Stomach (tissue), 19 donors: ENCODE measurements at regions of chrX and their contacts with region 1.

Region 1: GRCh38 chrX:69060631-69061408 is 104.4 kb downstream of the PJA1 start:
- DNase-seq: peak; percentile 54 to 63
- H3K4me3 ChIP-seq: no peak overlapping the region
- H3K27ac ChIP-seq: no peak overlapping the region
- H3K4me1 ChIP-seq: no peaks in the 10 kb centered on the region
- H3K27me3 ChIP-seq: peaks cover 0 to 6% (median 0%) of the 10 kb centered on the region in 3 donors
- CTCF ChIP-seq: peak in 4 of 7 experiments; percentile 12 to 50 (median 23)
- EP300 ChIP-seq: no peak
- POLR2A ChIP-seq: no peak

Region 2: GRCh38 chrX:69222103-69223090 is 161.6 kb after region 1 on chrX:
- intact Hi-C with region 1: loop called (anchors 10 kb)
- DNase-seq: peak; percentile 68 to 88
- H3K4me3 ChIP-seq: no peak overlapping the region
- H3K27ac ChIP-seq: no peak overlapping the region
- H3K4me1 ChIP-seq: peaks cover 0 to 12% (median 0%) of the 10 kb centered on the region in 4 donors
- H3K27me3 ChIP-seq: peaks cover 0 to 22% (median 0%) of the 10 kb centered on the region in 3 donors
- CTCF ChIP-seq: peak in 5 of 7 experiments; percentile 42 to 75 (median 54)
- EP300 ChIP-seq: no peak
- POLR2A ChIP-seq: no peak

Region 3: DNA sequence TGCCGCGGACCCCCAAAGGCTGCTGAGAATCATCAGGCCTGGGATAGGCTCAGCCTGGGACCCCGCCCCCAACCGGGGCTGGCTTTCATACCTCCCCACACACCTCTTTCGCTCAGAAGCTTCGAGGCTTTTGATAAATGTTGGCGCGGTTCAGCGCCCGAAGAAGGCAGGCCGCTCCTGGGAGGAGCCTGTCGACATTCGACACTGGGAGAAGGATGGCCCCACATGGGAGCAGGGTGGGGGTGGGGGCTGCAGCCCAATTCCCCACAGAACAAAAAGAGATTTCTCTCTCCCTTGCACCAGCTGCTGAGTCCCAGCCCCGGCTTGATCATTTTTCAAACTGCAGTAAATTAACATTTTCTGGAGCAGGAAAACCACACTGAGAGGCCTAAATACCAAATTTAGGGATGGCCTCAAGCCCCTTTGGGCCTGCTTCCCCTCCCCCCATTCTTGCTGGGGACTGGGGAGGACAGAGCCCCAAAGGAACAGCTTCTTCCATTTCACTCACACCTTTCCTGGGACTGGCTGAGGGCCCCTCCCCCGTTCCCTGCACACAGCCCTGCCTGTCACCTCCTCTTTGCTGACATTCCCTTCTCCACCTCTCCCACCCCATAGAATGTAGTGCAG is 217.4 kb after region 1 on chrX:
- intact Hi-C with region 1: no loop called
- DNase-seq: peak in 1 of 2 donors; percentile 55
- H3K4me3 ChIP-seq: no peak overlapping the region
- H3K27ac ChIP-seq: no peak overlapping the region
- H3K4me1 ChIP-seq: peaks cover 3 to 43% (median 24%) of the 10 kb centered on the region in 4 donors
- H3K27me3 ChIP-seq: peaks cover 0 to 13% (median 0%) of the 10 kb centered on the region in 3 donors
- CTCF ChIP-seq: no peak
- EP300 ChIP-seq: no peak
- POLR2A ChIP-seq: no peak